ENCODE measurements at regions of chr4 and their contacts with region 1.

Region 1: DNA sequence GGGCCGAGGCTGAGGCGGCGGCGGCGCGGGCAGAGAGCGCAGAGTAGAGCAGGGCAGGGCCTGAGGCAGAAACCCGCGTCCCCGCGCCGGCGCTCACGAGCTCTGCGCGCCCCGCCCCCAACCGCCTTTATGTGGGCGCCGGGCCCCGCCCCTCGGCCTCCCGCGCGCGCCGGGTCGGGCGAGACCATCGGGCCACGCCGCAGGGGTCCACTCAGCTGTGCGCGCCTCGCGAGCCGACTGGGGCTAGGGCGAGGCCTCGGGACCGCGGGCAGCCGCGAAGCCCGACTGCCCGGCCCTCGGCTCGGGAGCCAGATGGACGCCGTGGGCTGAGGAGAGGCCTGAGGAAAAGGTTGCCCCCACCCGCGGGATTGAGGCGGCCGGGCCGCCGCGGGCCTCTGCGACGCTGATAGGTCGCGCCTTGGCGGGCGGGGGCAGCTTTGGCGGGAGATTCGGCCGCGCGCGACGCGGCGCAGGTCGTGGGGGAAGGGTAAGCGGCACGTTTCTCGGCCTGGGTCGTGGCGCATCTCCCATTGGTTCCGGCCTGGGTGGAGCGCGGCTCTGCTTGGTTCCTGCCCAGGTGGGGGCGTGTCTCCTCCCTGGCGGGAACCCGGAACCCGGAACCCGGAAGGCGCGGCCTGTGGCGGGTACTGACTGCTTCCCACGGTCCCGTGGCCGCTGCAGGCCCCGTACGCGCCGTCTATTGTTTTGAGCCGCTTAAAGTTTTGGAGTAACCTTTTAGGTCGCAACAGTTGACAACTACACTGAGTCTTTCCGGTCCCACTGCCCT is at the start of gene SLBP:
- DNase-seq: peak; percentile 94 to 98 (median 96)
- ATAC-seq: peak; percentile 91 to 93 (median 92)
- H3K4me3 ChIP-seq: peak within 1 kb of the TSS; percentile 81 to 97 (median 88)
- H3K27ac ChIP-seq: peak within 1 kb of the TSS; percentile 98 to 100 (median 99)
- H3K4me1 ChIP-seq: peaks cover 0 to 60% (median 39%) of the 10 kb centered on the region in 12 donors
- H3K27me3 ChIP-seq: no peaks in the 10 kb centered on the region
- CTCF ChIP-seq: no peak
- POLR2A ChIP-seq: peak; percentile 5 to 87
- total RNA-seq, gene SLBP: 10.2 to 27.7 (median 11.7) TPM

Region 2: DNA sequence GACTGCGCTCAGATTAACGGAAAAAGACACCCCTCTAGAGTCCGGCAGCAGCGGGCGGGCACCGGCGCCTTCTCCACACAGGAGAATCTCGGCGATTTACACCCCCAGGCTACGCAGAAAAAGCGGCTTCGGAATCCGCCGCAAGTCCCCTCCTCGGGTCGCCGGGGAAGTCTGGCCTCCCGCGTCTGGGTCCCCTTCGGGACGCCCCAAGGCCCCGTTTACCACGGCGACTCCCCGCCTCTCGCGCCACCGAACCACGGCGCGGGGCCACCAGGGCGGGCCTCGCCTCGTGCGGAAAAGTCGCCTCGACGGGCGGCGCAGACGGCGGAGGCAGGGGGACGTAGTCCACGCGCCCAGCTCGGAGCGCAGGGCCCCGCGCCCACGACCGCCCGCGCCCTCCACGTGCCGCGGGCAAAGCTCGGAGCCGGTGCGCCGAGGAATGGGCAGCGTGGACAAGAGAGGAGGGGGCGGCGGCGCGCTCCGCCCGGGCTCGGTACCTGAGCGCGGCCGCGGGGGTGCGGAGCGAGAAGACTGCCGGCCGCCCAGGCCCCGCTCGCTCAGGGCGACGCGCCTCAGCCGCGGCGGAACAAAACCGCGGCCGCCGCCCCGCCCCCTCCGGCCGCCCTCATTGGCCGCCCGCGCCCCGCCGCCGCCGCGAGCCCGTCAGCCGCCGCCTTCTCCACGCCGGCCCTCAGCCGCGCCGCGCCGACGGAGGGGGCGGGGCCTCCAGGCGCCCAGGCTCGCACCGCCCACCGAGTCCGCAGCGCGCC is 28.5 kb before region 1 on chr4 and contains the start of gene FAM53A:
- intact Hi-C with region 1: loop called in 1 of 10 experiments (anchors 5 kb)
- DNase-seq: peak; percentile 90 to 96 (median 91)
- ATAC-seq: peak; percentile 79 to 97 (median 94)
- H3K4me3 ChIP-seq: peak within 1 kb of the TSS; percentile 33 to 87 (median 67)
- H3K27ac ChIP-seq: peak within 1 kb of the TSS in 11 of 12 donors; percentile 34 to 89 (median 70)
- H3K4me1 ChIP-seq: peaks cover 0 to 18% (median 6%) of the 10 kb centered on the region in 12 donors
- H3K27me3 ChIP-seq: no peaks in the 10 kb centered on the region
- CTCF ChIP-seq: no peak
- POLR2A ChIP-seq: peak in 1 of 2 donors; percentile 39
- total RNA-seq, gene FAM53A: 0.42 to 2.3 (median 0.99) TPM

Region 3: DNA sequence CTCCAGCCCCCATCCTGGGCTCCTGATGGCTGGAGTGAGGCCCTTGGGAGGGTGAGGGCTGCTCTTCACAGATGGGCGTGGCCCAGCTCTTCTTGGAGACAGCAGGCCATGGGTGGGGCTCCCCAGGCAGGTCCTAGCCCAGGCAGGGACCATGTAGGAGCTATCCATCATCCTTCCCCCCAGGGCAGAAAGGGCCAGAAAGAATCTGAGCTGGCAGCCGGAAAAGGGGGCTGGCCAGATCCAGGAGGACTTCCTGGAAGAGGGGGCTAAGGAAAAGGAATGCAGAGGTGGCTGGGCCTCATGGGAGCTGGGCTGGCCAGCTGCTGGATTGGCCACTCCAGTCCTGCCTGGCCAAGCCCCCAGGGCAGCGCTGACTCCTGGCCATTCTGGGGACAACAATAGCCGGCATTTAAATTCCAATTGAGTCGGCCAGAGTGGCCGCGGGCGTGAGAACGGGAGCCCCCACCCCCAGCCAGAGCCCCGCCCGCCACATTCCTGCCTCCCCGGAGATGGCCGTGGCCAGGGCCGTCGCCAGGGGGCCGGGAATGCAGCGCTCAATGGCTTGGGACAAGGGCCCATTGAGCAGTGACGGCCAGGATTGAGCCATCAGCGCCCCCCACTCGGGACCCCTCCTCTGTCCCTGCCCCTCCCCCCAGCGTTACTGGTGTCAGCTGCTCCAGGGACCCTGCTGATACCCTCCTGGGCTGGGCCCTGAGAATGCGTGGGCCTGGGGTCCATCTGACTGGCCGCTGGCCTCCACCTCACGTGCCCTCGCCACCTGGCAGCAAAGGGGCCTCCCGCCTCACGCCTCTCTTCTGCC is 65.6 kb after region 1 on chr4:
- intact Hi-C with region 1: no loop called
- DNase-seq: no peak
- ATAC-seq: peak in 1 of 4 donors; percentile 16
- H3K4me3 ChIP-seq: no peak overlapping the region
- H3K27ac ChIP-seq: no peak overlapping the region
- H3K4me1 ChIP-seq: peaks cover 0 to 6% (median 0%) of the 10 kb centered on the region in 12 donors
- H3K27me3 ChIP-seq: no peaks in the 10 kb centered on the region
- CTCF ChIP-seq: no peak
- POLR2A ChIP-seq: no peak

Measured in heart left ventricle (tissue), 16 donors.